ENCODE measurements at regions of chr13 and their contacts with region 1.

Region 1: DNA sequence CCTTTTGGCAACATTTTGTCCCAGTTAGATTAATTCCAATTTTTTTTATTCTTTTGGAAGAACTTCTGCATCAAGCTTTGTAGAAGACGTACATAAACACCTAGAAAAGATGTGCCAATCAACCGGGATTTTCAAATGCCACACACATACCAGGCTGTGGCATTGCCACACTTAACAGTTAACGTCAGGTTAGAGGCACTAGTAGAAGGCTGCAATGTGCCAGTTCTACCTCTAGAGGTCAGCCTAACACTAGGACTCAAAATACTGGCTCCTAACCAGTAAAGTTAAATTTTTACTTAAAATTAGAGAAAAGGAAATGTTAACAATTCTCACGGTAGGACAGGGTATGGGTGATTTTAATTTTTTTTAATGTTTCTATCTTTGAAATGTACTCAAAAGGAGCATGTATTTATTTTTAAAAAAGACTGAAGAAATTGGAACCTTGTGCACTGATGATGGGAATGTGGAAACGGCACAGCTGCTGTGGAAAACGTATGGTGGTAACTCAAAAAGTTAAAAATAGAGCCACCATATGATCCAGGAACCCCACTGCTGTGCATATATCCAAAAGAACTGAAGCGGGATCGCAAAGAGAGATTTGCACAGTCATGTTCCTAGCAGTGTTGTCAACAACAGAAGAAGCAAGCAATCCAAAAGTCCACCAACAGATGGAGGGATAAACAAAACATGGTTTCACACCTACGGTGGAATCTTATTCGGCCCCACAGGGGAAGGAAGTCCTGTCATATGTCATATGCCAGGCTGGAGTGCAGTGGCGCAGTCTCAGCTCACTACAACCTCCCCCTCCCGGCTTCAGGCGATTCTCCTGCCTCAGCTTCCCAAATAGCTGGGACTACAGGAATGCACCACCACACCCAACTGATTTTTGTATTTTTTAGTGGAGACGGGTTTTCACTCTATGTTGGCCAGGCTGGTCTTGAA is 30.3 kb downstream of the CRYL1 start:
- DNase-seq: peak in 8 of 9 donors; percentile 41 to 75 (median 70)
- ATAC-seq: peak; percentile 95
- H3K4me3 ChIP-seq: no peak overlapping the region
- H3K4me3 Mint-ChIP-seq: no peak overlapping the region
- H3K27ac ChIP-seq: no peak overlapping the region
- H3K27ac Mint-ChIP-seq: peak overlapping the region in 5 of 9 donors; percentile 29 to 87 (median 52)
- H3K4me1 ChIP-seq: no peaks in the 10 kb centered on the region
- H3K4me1 Mint-ChIP-seq: peaks cover 5 to 17% (median 13%) of the 10 kb centered on the region in 7 donors
- H3K27me3 ChIP-seq: no peaks in the 10 kb centered on the region
- H3K27me3 Mint-ChIP-seq: no peaks in the 10 kb centered on the region

Region 2: DNA sequence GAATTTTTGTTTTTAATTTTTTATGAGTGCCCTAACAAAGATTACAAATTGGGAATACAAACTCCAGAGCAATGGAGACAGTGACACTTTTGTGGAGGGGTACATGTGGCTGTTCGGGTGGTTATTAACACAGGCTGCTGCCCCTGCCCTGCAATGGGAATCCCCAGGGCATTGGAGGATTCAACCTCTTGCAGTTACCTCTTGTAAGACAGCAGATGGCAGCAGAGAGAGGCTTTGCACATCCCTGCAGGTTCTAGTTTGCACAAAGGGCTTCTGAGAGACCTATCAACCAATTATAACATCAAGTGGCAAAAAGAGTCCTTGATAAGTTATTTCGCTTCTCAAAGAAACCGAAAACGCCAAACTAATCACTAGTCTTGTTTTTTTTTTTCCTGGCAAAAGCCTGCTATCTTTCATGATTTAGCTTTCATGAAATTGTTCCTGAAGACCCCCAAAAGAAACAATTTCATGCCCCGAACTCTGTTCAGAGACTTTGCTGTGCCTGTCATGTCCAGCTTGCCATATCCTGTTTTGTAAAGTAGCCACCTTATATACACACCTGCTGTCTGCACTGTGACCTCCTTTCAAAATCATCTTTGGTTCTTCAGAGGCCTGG is 313.0 kb before region 1 on chr13:
- CTCF ChIA-PET with region 1: no interaction called
- POLR2A ChIA-PET with region 1: no interaction called
- intact Hi-C with region 1: loop called in 1 of 2 experiments (anchors 1 kb)
- DNase-seq: peak in 7 of 9 donors; percentile 43 to 77 (median 67)
- ATAC-seq: peak; percentile 99
- H3K4me3 ChIP-seq: no peak overlapping the region
- H3K4me3 Mint-ChIP-seq: no peak overlapping the region
- H3K27ac ChIP-seq: no peak overlapping the region
- H3K27ac Mint-ChIP-seq: no peak overlapping the region
- H3K4me1 ChIP-seq: no peaks in the 10 kb centered on the region
- H3K4me1 Mint-ChIP-seq: no peaks in the 10 kb centered on the region
- H3K27me3 ChIP-seq: peaks cover 0 to 10% of the 10 kb centered on the region in 2 donors
- H3K27me3 Mint-ChIP-seq: peaks cover 37 to 48% (median 43%) of the 10 kb centered on the region in 5 donors

Region 3: DNA sequence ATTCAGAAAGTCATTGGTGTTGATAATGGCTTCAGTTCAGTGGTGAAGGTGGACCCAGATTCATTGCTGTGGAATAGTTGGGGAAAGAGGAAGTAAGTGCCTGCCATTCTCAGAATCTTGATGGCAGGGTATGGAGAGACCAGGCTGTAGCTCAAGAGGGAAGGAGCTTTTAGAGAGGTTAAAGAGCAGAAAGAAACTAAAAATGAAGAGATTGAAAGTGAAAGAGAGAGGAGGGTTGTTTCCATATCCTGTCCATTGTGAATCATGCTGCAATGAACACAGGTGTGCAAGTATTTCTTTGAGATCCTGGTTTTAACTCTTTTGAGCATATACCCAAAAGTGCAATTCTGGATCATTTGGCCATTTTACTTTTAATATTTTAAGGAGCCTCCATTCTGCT is 275.8 kb before region 1 on chr13:
- CTCF ChIA-PET with region 1: no interaction called
- POLR2A ChIA-PET with region 1: no interaction called
- intact Hi-C with region 1: no loop called
- DNase-seq: peak in 1 of 9 donors; percentile 7
- ATAC-seq: no peak
- H3K4me3 ChIP-seq: no peak overlapping the region
- H3K4me3 Mint-ChIP-seq: peak overlapping the region in 5 of 10 donors; percentile 5 to 75 (median 25)
- H3K27ac ChIP-seq: no peak overlapping the region
- H3K27ac Mint-ChIP-seq: peak overlapping the region in 6 of 9 donors; percentile 0 to 88 (median 37)
- H3K4me1 ChIP-seq: no peaks in the 10 kb centered on the region
- H3K4me1 Mint-ChIP-seq: peaks cover 9 to 20% (median 13%) of the 10 kb centered on the region in 7 donors
- H3K27me3 ChIP-seq: no peaks in the 10 kb centered on the region
- H3K27me3 Mint-ChIP-seq: peaks cover 0 to 12% (median 0%) of the 10 kb centered on the region in 5 donors

Region 4: DNA sequence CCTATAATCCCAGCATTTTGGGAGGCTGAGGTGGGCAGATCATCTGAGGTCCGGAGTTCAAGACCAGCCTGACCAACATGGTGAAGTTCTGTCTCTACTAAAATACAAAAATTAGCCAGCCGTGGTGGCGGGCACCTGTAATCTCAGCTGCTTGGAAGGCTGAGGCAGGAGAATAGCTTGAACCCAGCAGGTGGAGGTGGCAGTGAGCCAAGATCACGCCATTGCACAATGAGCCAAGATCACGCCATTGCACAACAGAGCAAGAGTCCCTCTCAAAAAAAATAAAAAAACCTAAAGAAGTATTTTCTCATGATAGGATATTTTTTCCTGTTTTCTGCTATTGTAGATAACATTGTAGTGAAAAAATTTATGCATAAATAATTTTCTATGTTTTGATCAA is 84.9 kb after region 1 on chr13:
- CTCF ChIA-PET with region 1: no interaction called
- POLR2A ChIA-PET with region 1: no interaction called
- intact Hi-C with region 1: loop called in 1 of 2 experiments (anchors 5 kb)
- DNase-seq: no peak
- ATAC-seq: no peak
- H3K4me3 ChIP-seq: no peak overlapping the region
- H3K4me3 Mint-ChIP-seq: no peak overlapping the region
- H3K27ac ChIP-seq: no peak overlapping the region
- H3K27ac Mint-ChIP-seq: no peak overlapping the region
- H3K4me1 ChIP-seq: no peaks in the 10 kb centered on the region
- H3K4me1 Mint-ChIP-seq: peaks cover 0 to 6% (median 0%) of the 10 kb centered on the region in 7 donors
- H3K27me3 ChIP-seq: no peaks in the 10 kb centered on the region
- H3K27me3 Mint-ChIP-seq: no peaks in the 10 kb centered on the region

Region 5: DNA sequence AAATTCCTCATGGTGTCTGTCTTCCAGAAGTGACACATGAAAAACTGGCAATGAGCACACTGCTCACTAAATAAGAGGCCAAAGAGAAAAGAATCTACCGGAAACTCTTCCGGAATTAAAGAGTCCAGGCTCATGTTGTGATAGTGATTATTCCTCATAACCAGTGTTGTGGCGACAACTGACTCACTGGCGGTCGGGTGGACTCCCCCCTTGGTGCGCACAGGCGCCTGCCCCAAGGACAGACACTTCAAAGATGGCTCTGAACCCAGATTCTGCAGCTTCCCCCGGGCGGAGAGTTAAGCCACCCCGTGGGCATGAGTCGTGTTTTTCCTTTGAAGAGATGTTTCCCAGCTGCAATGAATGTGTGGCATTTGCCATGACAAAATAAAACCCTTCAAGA is 218.4 kb after region 1 on chr13:
- CTCF ChIA-PET with region 1: no interaction called
- POLR2A ChIA-PET with region 1: no interaction called
- intact Hi-C with region 1: loop called in 1 of 2 experiments (anchors 1 kb)
- DNase-seq: no peak
- ATAC-seq: no peak
- H3K4me3 ChIP-seq: no peak overlapping the region
- H3K4me3 Mint-ChIP-seq: no peak overlapping the region
- H3K27ac ChIP-seq: no peak overlapping the region
- H3K27ac Mint-ChIP-seq: no peak overlapping the region
- H3K4me1 ChIP-seq: no peaks in the 10 kb centered on the region
- H3K4me1 Mint-ChIP-seq: peaks cover 5 to 13% (median 8%) of the 10 kb centered on the region in 7 donors
- H3K27me3 ChIP-seq: no peaks in the 10 kb centered on the region
- H3K27me3 Mint-ChIP-seq: peaks cover 0 to 7% (median 6%) of the 10 kb centered on the region in 5 donors

Region 6: DNA sequence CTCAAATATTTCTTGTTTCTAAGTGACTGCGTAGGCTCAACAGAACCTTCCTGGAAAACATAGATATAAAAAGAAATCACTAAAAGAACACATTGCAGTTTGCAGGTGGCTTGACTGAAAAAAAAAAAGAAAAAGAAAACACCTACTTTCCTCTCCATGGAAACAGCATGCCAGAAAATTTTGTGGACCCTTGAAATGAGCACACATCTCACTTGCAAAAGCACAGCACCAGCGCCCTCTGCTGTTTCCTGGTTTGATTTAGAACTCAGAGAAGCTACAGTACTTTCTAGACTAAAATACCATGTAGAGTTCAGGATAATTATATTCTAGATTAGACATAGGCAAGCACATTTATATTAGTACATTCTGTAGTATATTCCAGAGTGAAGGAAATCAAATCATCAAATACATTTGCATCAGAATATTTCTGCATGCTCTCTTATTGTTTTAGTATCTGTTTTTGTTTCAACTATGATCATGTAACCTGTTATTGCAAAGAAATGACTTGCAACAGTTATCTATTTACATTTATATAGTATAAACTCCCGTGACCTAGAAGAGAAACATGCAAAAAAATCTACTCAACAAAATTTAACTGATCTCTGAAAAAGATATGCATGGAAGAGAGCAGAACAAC is 429.5 kb after region 1 on chr13:
- CTCF ChIA-PET with region 1: interaction called, 9 read pairs
- POLR2A ChIA-PET with region 1: no interaction called
- intact Hi-C with region 1: loop called (anchors 1 kb)
- DNase-seq: peak; percentile 26 to 68 (median 59)
- ATAC-seq: peak; percentile 72
- H3K4me3 ChIP-seq: no peak overlapping the region
- H3K4me3 Mint-ChIP-seq: no peak overlapping the region
- H3K27ac ChIP-seq: no peak overlapping the region
- H3K27ac Mint-ChIP-seq: no peak overlapping the region
- H3K4me1 ChIP-seq: no peaks in the 10 kb centered on the region
- H3K4me1 Mint-ChIP-seq: no peaks in the 10 kb centered on the region
- H3K27me3 ChIP-seq: no peaks in the 10 kb centered on the region
- H3K27me3 Mint-ChIP-seq: peaks cover 0 to 6% (median 0%) of the 10 kb centered on the region in 5 donors